ENCODE measurements at regions of chr5 and their contacts with region 1.

Region 1: DNA sequence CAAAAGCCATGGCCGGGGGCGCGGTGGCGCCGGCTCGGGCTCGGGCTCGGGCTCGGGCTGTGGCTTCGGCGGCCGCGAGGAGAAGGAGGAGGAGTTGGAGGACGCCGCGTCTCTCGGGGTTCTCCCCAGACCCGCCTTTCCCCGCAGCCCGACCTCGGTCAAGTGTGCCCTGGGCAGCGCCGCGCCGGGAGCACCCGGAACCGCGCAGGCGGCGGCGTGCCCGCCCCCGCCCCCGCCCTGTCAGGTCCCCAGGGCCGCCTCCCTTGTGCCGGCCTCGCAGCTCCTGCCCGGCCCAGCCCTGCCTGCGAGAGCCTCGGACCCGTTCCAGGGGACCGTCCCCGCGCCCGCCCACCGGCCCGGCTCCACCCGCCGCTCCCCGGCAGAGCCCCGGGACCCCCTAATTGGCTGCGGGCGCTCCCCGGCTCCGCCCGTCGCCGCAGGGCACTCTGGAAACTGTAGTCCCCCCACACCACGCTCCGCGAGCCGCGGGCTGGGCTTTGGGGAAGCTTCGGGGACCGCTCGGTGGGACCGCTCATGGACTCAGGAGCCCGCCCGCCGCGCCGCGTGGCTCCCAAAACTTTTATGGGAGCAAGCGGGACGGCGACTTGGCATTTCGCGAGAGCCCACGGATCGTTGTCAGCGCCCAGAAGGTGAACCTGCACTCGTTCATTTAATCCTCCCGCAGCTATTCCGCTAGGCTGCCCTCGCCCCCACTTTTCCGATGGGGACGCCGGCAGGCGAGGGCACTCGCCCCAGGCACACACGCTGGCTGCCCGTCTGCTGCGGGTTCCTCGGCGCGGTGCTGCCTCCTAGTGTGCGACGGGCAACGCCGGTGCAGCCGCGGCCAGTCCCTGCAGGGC is at the start of gene STK10:
- DNase-seq: peak; percentile 93 to 96
- ATAC-seq: peak; percentile 94 to 96 (median 94)
- H3K4me3 ChIP-seq: peak within 1 kb of the TSS; percentile 94
- H3K27ac ChIP-seq: peak within 1 kb of the TSS; percentile 87
- H3K4me1 ChIP-seq: peaks cover 13% of the 10 kb centered on the region
- H3K27me3 ChIP-seq: no peaks in the 10 kb centered on the region
- CTCF ChIP-seq: peak; percentile 91
- total RNA-seq, gene STK10: 6.1 to 8.6 (median 6.6) TPM

Region 2: GRCh38 chr5:171913987-171914273 is 274.3 kb before region 1 on chr5:
- intact Hi-C with region 1: loop called in 1 of 2 experiments (anchors 5 kb)
- DNase-seq: no peak
- ATAC-seq: peak in 1 of 4 donors; percentile 58
- H3K4me3 ChIP-seq: no peak overlapping the region
- H3K27ac ChIP-seq: no peak overlapping the region
- H3K4me1 ChIP-seq: peaks cover 21% of the 10 kb centered on the region
- H3K27me3 ChIP-seq: no peaks in the 10 kb centered on the region
- CTCF ChIP-seq: no peak

Region 3: GRCh38 chr5:172035039-172035438 is 153.2 kb before region 1 on chr5:
- intact Hi-C with region 1: no loop called
- DNase-seq: no peak
- ATAC-seq: no peak
- H3K4me3 ChIP-seq: no peak overlapping the region
- H3K27ac ChIP-seq: no peak overlapping the region
- H3K4me1 ChIP-seq: peaks cover 3% of the 10 kb centered on the region
- H3K27me3 ChIP-seq: no peaks in the 10 kb centered on the region
- CTCF ChIP-seq: no peak

Region 4: GRCh38 chr5:172106511-172107356 is 81.5 kb before region 1 on chr5:
- intact Hi-C with region 1: loop called (anchors 1 to 2 kb)
- DNase-seq: peak; percentile 57 to 72
- ATAC-seq: peak; percentile 42 to 81 (median 56)
- H3K4me3 ChIP-seq: peak overlapping the region; percentile 47
- H3K27ac ChIP-seq: no peak overlapping the region
- H3K4me1 ChIP-seq: peaks cover 14% of the 10 kb centered on the region
- H3K27me3 ChIP-seq: no peaks in the 10 kb centered on the region
- CTCF ChIP-seq: peak; percentile 92

Region 5: DNA sequence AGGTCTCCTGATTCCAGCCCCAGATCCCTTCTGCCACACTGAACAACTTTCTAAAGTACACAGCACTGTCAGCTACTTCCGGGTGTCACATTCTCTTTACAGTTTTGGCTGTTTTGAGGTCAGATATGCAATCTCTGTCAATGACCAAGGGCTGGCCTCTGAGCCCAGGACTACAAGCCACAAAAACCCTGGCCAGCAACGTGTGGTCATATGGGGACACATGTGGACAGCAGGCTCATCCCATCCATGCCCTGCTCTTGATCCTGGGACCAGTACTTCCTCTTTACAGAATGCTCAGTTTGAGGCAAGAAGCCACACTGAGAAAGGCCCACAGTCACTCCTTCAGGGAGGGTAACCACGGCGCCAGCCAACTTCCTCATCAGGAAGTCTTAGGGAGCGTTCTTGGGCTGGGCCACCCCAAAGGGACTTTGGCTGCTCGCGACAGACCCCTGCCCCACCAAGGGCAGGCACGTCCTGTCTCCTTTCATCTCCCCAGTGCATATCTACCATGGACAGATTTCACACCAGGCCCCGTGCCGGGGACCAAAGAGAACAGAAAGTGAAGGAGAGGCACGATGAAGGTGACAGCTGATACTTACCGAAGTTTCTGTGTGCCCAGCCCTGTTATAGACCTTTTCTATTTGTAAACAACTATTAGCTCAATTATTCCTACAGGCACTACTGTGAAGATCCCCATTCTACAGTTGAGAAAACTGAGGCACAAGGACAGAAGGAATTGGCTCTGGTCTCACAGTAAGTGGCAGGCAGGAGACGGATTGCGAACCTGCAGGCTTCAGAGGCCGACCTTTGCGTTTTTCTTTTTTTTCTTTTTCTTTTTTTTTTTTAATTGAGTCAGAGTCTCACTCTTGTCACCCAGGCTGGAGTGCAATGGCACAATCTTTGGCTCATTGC is 37.5 kb before region 1 on chr5:
- intact Hi-C with region 1: no loop called
- DNase-seq: peak; percentile 46 to 73
- ATAC-seq: peak; percentile 25 to 72 (median 50)
- H3K4me3 ChIP-seq: no peak overlapping the region
- H3K27ac ChIP-seq: no peak overlapping the region
- H3K4me1 ChIP-seq: no peaks in the 10 kb centered on the region
- H3K27me3 ChIP-seq: no peaks in the 10 kb centered on the region
- CTCF ChIP-seq: no peak

Region 6: DNA sequence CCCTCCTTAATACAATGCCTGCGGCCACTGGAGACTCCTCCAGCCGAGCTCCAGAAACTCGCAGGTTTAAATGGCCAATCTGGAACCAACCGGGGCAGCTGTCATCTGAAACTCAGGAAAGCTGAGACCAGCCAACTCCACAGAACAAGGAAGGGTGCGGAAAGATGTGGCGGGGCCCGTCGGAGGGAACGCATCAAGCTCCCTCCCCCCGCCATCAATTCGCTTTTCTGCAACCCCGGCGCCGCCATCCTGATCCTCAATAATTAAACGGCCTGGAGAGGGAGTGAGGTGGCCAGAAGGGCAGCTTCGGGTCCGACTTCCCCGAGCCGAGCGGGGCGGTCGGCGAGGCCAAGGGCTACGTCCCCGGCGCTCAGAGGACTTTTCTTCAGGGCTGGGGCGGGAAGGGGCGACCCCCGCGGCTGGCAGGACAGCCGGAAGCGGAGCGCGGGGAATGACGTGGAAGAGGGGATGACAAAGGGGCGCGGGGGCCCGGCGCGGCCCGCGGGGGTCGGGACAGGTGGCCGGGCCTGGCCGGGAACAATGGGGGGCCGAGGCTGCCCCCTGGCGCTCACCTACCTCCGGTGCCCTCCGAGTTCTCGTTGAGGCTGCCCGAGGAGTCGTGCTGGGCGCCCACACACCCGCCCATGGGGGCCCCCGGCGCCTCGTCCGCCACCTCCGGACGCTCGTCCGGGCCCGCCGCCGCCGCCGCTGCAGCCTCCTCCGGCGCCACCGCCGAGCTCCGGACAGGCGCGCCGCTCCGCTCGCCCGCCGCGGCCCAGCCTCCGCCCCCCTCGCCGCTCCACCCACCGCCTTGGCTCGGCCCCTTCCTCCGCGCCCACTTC is 95.0 kb after region 1 on chr5 and contains the start of gene UBTD2:
- intact Hi-C with region 1: loop called in 1 of 2 experiments (anchors 1 kb)
- DNase-seq: peak; percentile 85 to 91
- ATAC-seq: peak; percentile 83 to 89 (median 85)
- H3K4me3 ChIP-seq: peak within 1 kb of the TSS; percentile 94
- H3K27ac ChIP-seq: peak within 1 kb of the TSS; percentile 93
- H3K4me1 ChIP-seq: peaks cover 15% of the 10 kb centered on the region
- H3K27me3 ChIP-seq: no peaks in the 10 kb centered on the region
- CTCF ChIP-seq: peak; percentile 59
- total RNA-seq, gene UBTD2: 7.4 to 12.3 (median 8.6) TPM

Region 7: DNA sequence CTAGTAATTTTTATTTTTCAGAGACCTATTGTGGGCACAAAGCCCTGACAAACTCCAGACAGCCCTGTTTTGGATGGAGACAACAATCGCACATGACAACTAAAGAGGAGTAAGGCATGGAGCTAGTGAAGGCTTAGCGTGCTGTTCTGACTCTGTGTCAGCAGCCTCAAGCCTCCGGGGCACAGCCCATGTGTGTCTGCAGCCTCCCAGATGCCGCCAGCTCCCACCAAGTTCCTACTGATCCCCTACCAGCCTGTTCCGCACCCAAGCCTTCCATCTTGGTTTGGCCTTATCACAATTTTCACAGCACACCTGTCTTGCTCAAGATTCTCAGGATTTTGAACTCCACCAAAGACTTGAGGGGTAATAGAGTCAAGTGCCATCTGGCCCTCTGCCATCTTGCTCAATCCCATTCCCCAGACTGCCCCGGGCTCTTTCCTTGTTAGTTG is 336.3 kb after region 1 on chr5:
- intact Hi-C with region 1: no loop called
- DNase-seq: no peak
- ATAC-seq: no peak
- H3K4me3 ChIP-seq: no peak overlapping the region
- H3K27ac ChIP-seq: no peak overlapping the region
- H3K4me1 ChIP-seq: no peaks in the 10 kb centered on the region
- H3K27me3 ChIP-seq: no peaks in the 10 kb centered on the region
- CTCF ChIP-seq: no peak

Measured in psoas muscle (tissue), 8 donors.